Heart right ventricle (tissue), 16 donors: ENCODE measurements at regions of chr4 and their contacts with region 1.

Region 1: GRCh38 chr4:184424993-184425758 is 49.2 kb downstream of the IRF2 start:
- DNase-seq: peak in 1 of 2 donors; percentile 59
- ATAC-seq: peak in 7 of 8 donors; percentile 26 to 69 (median 51)
- H3K4me3 ChIP-seq: no peak overlapping the region
- H3K27ac ChIP-seq: peak overlapping the region in 6 of 10 donors; percentile 14 to 48 (median 38)
- H3K4me1 ChIP-seq: peaks cover 6 to 85% (median 77%) of the 10 kb centered on the region in 9 donors
- H3K27me3 ChIP-seq: no peaks in the 10 kb centered on the region
- CTCF ChIP-seq: no peak

Region 2: DNA sequence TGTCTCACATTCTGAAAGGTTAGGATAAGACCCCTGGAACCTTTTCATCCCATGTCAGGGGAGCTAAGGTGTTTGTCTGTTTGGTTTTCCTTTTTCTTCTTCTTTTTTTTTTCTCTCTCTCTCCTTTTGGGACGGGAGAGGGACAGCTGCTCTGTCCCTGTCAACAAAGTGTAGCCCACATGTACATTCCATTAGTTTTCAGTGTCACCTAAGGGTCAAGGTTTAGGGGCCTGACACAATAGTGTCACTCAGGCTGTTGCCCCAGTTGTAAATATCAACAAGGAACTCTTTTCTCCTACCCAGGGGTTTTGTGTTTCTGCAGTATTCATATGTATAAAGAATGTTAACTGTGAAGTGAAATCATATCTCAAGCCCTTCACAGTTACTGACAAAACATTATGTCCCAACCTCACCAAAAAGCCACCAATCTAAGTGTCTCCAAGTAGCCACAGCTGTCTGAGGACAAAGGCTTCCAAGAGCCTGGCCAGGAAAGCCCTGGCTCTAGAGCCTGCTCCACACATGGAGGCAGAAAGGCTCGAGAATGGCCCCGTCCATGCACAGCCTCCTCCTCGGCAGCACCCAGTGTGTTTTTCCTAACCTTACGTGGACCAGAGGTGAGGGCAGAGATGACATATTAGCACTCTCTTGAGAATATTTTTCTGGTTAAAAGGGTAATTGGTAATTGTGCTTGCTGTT is 39.7 kb after region 1 on chr4:
- intact Hi-C with region 1: loop called in 1 of 10 experiments (anchors 5 kb)
- DNase-seq: no peak
- ATAC-seq: peak in 4 of 8 donors; percentile 13 to 67 (median 46)
- H3K4me3 ChIP-seq: no peak overlapping the region
- H3K27ac ChIP-seq: peak overlapping the region in 1 of 10 donors; percentile 11
- H3K4me1 ChIP-seq: peaks cover 2 to 87% (median 68%) of the 10 kb centered on the region in 9 donors
- H3K27me3 ChIP-seq: no peaks in the 10 kb centered on the region
- CTCF ChIP-seq: no peak